Activated CD8-positive, alpha-beta memory T cell treated with anti-CD3 and anti-CD28 coated beads, Interleukin-2, amount 10 ng/mL, durations not matched to agents 7 days and 5 days (primary cell): ENCODE measurements at regions of chr12 and their contacts with region 1.

Region 1: DNA sequence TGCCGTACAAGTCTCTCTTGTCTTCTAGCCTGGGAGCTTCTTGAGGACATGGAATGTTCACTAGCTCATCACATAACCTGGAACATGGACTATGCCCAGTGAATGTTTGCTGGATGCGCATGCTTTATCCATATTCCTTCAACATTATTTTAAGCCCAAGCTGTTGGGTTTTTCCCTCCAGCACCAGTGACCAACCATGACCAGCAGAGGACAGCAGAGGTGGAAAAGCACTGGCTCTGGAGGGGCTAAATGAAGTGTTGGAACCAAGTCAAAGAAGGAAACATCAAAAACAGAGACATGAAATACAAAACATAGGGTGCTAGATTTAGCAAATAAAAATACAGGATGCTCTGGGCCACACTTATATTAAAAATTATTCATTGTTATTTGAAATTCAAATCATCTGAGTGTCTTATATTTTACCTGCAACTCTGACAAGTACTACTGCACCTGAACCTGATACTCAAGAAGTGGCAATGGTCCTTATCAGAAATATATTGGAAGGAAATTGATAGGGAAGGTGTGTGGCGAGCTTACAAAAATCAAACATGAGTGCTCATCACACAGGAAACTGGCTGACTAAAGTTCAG is 23.1 kb upstream of the HELB start:
- DNase-seq: peak; percentile 69
- ATAC-seq: peak; percentile 79
- H3K4me3 Mint-ChIP-seq: no peak overlapping the region
- H3K27ac Mint-ChIP-seq: no peak overlapping the region
- H3K4me1 Mint-ChIP-seq: peaks cover 23% of the 10 kb centered on the region
- H3K27me3 Mint-ChIP-seq: no peaks in the 10 kb centered on the region

Region 2: GRCh38 chr12:66301944-66302826 is 23.0 kb after region 1 on chr12 and contains the start of gene HELB:
- CTCF ChIA-PET with region 1: interaction called, 17 read pairs
- DNase-seq: peak; percentile 99
- ATAC-seq: peak; percentile 87
- H3K4me3 Mint-ChIP-seq: peak within 1 kb of the TSS; percentile 100
- H3K27ac Mint-ChIP-seq: peak within 1 kb of the TSS; percentile 100
- H3K4me1 Mint-ChIP-seq: peaks cover 46% of the 10 kb centered on the region
- H3K27me3 Mint-ChIP-seq: no peaks in the 10 kb centered on the region
- total RNA-seq, gene HELB: 19.1 to 34.6 TPM